Activated CD4-positive, alpha-beta T cell treated with anti-CD3 and anti-CD28 coated beads for 36 hours (primary cell): ENCODE measurements at regions of chr1 and their contacts with region 1.

Region 1: GRCh38 chr1:24586970-24587820 is 31.3 kb downstream of the NCMAP start:
- DNase-seq: peak; percentile 75
- ATAC-seq: peak; percentile 100
- H3K4me3 Mint-ChIP-seq: no peak overlapping the region
- H3K27ac Mint-ChIP-seq: peak overlapping the region; percentile 55
- H3K4me1 Mint-ChIP-seq: peaks cover 6% of the 10 kb centered on the region
- H3K27me3 Mint-ChIP-seq: peaks cover 3% of the 10 kb centered on the region

Region 2: GRCh38 chr1:24409535-24409934 is 177.7 kb before region 1 on chr1:
- CTCF ChIA-PET with region 1: interaction called, 63 read pairs
- POLR2A ChIA-PET with region 1: no interaction called
- intact Hi-C with region 1: no loop called
- DNase-seq: no peak
- ATAC-seq: no peak
- H3K4me3 Mint-ChIP-seq: no peak overlapping the region
- H3K27ac Mint-ChIP-seq: no peak overlapping the region
- H3K4me1 Mint-ChIP-seq: peaks cover 15% of the 10 kb centered on the region
- H3K27me3 Mint-ChIP-seq: no peaks in the 10 kb centered on the region

Region 3: DNA sequence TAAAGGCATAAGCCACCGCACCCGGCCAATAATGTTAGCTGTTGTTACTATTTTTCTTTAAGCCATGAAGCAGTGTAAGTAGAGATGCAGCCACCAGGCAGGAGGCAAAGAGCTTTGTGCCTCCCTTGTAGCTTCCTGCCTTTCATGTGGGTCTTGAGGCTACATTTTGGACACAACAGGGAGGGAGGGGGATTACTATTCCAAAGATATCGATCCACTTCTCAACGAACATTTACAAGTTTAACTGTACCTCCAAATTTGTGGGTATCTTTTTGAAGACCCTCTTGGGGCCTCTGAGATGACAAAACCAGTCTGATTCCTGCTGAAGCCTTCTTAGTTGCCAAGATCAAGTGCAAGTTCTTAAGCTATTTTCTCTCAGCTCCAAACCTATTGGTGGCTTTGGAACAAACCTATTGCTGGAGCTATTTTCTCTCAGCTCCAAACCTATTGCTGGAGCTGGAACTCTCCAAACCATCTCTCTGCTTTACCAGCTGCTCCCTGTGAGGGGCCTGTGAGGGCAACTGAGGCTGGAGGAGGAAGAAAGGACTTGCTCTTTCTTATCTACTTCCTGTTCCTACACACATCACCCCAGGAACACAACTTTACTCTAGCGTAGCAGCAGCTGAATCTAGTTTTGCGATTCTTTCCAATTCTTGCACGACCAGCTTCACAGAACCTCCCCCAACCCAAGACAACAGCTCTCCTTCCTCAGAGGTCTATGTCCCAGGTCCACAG is 100.7 kb before region 1 on chr1:
- CTCF ChIA-PET with region 1: interaction called, 6 read pairs
- POLR2A ChIA-PET with region 1: no interaction called
- intact Hi-C with region 1: loop called in 1 of 2 experiments (anchors 5 kb)
- DNase-seq: peak; percentile 36
- ATAC-seq: no peak
- H3K4me3 Mint-ChIP-seq: peak overlapping the region; percentile 61
- H3K27ac Mint-ChIP-seq: peak overlapping the region; percentile 91
- H3K4me1 Mint-ChIP-seq: peaks cover 79% of the 10 kb centered on the region
- H3K27me3 Mint-ChIP-seq: no peaks in the 10 kb centered on the region

Region 4: DNA sequence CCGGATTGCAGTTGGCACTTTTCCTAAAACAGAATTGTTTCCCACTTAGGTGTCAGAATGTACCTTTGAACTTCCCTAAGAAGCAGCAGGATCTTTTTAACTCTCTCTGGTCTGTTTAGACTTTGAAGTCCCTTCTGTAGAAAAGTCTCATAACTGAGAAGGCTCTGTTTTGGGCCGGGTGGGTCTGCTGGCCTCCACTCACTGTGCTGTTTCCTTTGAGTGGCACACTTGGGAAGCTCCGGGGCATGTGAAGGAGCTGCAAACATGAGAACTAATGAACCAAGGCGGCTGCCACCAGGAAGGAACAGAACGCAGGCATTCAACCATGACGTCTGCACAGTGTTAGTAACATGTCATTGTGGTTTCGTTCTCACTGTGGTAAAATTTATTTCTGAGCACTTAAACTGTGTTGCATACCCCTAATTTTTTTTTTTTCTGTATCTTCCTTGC is 50.8 kb before region 1 on chr1:
- CTCF ChIA-PET with region 1: interaction called, 45 read pairs
- POLR2A ChIA-PET with region 1: interaction called, 3 read pairs
- intact Hi-C with region 1: no loop called
- DNase-seq: peak; percentile 81
- ATAC-seq: peak; percentile 52
- H3K4me3 Mint-ChIP-seq: peak overlapping the region; percentile 76
- H3K27ac Mint-ChIP-seq: peak overlapping the region; percentile 99
- H3K4me1 Mint-ChIP-seq: peaks cover 85% of the 10 kb centered on the region
- H3K27me3 Mint-ChIP-seq: no peaks in the 10 kb centered on the region

Region 5: DNA sequence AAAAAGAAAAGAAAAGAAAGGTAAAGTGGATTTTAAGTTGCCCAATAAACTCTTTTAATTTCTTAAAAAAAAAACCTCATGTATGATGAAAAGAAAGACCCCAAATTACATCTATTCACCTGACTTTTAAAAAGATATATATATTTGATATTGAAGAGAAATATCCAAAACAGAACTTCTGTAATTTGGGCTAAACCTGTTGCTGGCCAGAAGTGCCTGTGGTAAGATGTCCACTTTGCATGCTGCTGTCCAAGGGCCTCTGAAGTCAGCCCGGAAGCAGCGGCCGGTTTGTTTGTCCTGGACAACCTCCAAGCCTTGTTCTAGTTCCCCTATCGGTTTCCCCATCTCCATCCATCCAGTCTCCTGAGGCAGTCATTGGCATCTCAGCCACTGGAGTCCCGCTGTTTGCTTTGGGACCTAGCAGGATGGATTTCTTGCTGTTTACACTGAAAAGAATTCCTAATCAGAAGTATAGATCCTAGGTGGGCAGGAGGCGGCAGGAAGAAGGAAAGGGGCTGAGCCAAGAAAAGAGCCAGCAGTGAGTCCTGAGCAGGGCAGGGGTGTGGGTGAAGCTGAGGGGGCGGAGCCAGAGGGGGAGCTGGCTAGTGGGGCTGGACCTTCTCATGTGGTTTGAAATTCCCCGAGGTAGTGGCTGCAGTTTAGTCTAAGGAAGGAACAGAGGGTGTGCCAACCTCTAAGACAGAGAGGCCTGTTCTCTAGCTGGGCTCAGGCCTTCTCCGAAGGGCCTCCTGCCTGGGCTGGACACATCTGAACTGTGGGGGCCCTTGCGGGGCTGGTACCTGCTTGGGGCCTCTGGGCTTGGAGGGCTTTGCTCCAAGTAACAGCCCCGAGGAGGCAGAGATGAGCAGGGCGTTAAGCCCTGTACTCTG is 28.0 kb before region 1 on chr1:
- CTCF ChIA-PET with region 1: interaction called, 14 read pairs
- POLR2A ChIA-PET with region 1: no interaction called
- intact Hi-C with region 1: no loop called
- DNase-seq: no peak
- ATAC-seq: no peak
- H3K4me3 Mint-ChIP-seq: no peak overlapping the region
- H3K27ac Mint-ChIP-seq: no peak overlapping the region
- H3K4me1 Mint-ChIP-seq: peaks cover 4% of the 10 kb centered on the region
- H3K27me3 Mint-ChIP-seq: peaks cover 4% of the 10 kb centered on the region

Region 6: DNA sequence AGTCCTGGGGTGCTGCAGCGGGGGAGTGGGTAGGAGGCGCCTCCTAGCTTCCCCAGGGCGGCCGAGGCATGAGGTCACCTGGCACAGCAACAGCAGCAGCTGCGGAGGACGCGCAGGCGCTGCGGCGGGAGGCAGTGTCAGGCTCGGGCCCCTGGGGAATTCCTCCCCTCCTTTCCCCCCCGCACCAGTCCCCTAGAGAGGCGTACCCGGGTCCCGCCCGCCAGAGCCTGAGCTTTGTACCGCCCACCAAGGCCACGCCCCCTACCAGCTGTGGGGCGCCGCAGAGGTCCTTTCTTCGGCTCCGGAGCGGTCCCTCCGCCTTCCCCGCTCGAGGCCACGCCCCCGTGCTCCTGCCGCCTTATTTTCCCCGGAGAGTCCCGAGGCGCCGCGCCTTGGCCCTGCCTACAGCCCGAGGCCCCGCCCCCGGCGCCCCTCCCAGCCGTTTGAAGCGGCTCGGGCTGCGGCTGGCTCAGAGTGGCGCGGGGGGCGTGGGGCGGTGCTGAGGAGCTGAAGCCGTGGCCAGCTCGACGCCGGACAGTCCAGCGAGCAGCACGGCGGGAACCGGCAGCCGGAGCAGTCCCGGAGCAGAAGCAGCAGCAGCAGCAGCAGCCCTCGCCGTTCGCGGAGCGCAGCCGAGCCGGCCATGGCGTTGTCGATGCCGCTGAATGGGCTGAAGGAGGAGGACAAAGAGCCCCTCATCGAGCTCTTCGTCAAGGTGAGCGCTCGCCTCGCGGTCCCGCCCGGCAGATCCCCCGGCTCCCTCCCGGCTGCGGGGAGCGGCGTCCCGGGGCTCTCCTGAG is 157.9 kb after region 1 on chr1 and contains the start of gene CLIC4:
- CTCF ChIA-PET with region 1: no interaction called
- POLR2A ChIA-PET with region 1: no interaction called
- intact Hi-C with region 1: no loop called
- DNase-seq: peak; percentile 100
- ATAC-seq: peak; percentile 93
- H3K4me3 Mint-ChIP-seq: peak within 1 kb of the TSS; percentile 90
- H3K27ac Mint-ChIP-seq: peak within 1 kb of the TSS; percentile 90
- H3K4me1 Mint-ChIP-seq: peaks cover 44% of the 10 kb centered on the region
- H3K27me3 Mint-ChIP-seq: no peaks in the 10 kb centered on the region
- total RNA-seq, gene CLIC4: 29.8 to 33.1 TPM

Region 7: GRCh38 chr1:24779689-24780464 is 192.7 kb after region 1 on chr1:
- CTCF ChIA-PET with region 1: no interaction called
- POLR2A ChIA-PET with region 1: no interaction called
- intact Hi-C with region 1: no loop called
- DNase-seq: no peak
- ATAC-seq: no peak
- H3K4me3 Mint-ChIP-seq: no peak overlapping the region
- H3K27ac Mint-ChIP-seq: no peak overlapping the region
- H3K4me1 Mint-ChIP-seq: peaks cover 2% of the 10 kb centered on the region
- H3K27me3 Mint-ChIP-seq: no peaks in the 10 kb centered on the region

Region 8: DNA sequence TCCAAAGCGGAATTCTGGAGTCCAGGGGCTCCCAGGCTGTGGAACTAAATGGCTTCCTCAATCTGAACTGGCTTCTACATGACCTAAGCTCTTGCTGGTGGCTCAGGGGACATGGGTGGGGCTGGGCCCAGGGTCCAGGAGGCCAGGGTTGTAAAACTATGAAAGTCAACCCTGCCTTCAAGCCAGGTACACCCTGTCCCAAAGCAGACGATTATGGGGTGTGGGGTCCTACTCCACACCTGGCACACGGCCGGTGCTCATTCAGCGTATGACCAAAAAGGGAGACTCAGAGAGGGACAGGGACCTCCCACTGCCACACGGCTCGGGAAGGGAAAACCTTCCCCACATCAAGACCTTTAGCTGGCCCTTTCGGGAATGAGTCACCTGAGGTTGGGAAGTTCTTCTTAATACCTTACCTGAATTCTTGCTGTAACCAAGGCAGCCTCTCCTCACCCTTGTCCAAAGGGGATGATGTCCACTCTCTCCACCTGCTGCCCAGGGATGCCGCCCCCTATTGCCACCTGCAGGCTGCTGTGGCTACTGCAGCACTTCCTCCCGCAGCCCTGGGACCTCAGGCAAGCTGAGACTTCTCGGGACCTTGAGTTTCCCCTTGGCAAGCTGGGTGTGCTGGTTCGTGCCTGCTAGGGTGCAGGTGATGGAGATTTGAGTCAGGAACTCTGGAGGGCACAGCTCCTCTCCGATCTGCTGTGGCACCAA is 310.7 kb after region 1 on chr1:
- CTCF ChIA-PET with region 1: no interaction called
- POLR2A ChIA-PET with region 1: no interaction called
- intact Hi-C with region 1: no loop called
- DNase-seq: peak; percentile 79
- ATAC-seq: peak; percentile 45
- H3K4me3 Mint-ChIP-seq: peak overlapping the region; percentile 43
- H3K27ac Mint-ChIP-seq: no peak overlapping the region
- H3K4me1 Mint-ChIP-seq: peaks cover 17% of the 10 kb centered on the region
- H3K27me3 Mint-ChIP-seq: no peaks in the 10 kb centered on the region